ENCODE measurements at regions of chr12 and their contacts with region 1.

Region 1: GRCh38 chr12:14769969-14770495 is 33.2 kb downstream of the WBP11 start:
- DNase-seq: peak; percentile 72

Region 2: GRCh38 chr12:14756334-14757143 is 13.5 kb before region 1 on chr12:
- CTCF ChIA-PET with region 1: interaction called, 9 read pairs
- POLR2A ChIA-PET with region 1: interaction called, 27 read pairs
- DNase-seq: peak; percentile 27

Region 3: DNA sequence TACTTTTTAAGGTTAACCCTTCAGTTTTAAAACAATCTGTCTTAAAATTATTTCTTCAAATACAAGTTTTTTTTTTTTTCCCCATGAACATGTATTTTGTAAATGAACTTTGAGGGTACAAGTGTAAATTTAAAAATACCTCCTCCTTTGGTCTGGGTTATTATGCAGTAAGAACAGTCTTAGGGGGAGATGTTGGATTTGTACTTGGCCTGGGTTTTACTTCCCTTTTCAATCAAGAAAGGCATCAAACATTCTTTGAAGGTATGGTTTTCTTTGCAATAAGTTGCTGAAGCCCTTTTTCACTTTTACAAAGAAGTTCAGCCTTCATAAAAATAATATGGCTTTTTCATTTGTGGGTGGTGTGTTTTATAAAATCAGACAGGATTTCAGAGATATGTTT is 12.7 kb after region 1 on chr12:
- CTCF ChIA-PET with region 1: interaction called, 3 read pairs
- POLR2A ChIA-PET with region 1: interaction called, 31 read pairs
- DNase-seq: no peak

Region 4: DNA sequence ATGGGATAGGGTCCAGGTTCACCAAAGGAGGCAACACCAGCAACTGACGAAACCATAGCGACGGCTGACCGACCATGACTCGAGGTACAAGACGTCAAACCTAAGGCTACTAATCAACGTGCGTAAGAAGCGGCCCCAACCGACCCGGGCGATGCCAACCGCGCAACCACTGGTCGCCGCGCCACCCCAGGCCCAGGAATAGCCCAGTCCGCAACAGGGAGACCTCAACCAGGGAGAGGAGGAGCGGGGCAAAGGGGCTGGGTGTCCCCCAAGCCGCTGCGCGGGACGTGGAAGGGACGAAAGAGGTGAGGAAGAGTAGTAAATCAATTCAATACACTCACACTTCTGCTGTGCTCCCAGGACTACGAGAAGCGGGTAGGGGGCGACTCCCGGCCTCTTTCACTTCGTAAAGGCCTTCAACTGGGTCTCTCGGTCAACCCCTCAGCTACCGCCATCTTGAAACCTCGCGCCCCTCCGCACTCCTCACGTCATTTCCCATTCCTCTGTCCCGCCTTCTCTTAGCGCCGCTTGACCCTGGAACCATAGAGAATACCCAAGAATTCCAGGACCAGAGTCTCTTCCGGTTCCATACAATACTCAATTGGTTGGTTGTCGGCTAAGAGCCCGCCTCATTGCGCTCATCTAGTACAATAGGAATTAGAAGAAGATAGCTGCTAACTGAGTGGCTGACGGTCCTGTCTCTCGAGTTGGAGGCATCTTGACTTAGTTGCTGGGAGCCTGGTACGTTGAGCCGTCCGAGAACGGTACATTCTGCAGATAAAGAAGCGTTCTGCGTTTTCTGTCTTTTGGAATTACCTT is 33.2 kb after region 1 on chr12 and contains the starts of genes C12orf60 and WBP11:
- CTCF ChIA-PET with region 1: interaction called, 5 read pairs
- POLR2A ChIA-PET with region 1: interaction called, 69 read pairs
- DNase-seq: peak; percentile 89

Measured in HEK293T (cell line).